PC-3 (cell line): ENCODE measurements at regions of chr16 and their contacts with region 1.

Region 1: DNA sequence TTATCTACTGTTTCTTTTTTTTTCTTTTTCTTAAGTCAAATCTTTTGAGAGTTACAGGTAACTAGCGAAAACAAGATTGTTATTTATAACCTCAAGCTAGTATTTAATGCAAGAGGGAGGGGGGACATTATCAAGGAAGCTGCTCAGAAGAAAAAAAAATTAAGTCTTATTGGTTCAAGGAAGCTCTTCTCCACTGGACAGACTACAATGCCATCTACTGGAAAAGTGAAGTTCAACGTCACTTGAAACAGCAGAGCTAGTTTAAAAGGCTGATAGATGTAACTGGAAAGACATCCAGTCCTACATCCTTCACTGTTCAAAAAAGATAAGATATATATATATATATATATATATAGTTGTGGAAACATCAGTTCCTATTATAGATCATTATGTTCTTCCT is 418.0 kb upstream of the PSMD7 start:
- DNase-seq: peak; percentile 62
- ATAC-seq: peak; percentile 61
- H3K4me3 ChIP-seq: no peak overlapping the region
- H3K27ac ChIP-seq: no peak overlapping the region
- H3K4me1 ChIP-seq: no peaks in the 10 kb centered on the region
- H3K27me3 ChIP-seq: peaks cover 43% of the 10 kb centered on the region
- CTCF ChIP-seq: peak; percentile 57

Region 2: GRCh38 chr16:72124761-72125634 is 1753.6 kb before region 1 on chr16:
- CTCF ChIA-PET with region 1: no interaction called
- POLR2A ChIA-PET with region 1: no interaction called
- intact Hi-C with region 1: loop called (anchors 10 kb)
- DNase-seq: peak; percentile 61
- ATAC-seq: peak; percentile 86
- H3K4me3 ChIP-seq: no peak overlapping the region
- H3K27ac ChIP-seq: no peak overlapping the region
- H3K4me1 ChIP-seq: no peaks in the 10 kb centered on the region
- H3K27me3 ChIP-seq: no peaks in the 10 kb centered on the region
- CTCF ChIP-seq: peak; percentile 76

Region 3: DNA sequence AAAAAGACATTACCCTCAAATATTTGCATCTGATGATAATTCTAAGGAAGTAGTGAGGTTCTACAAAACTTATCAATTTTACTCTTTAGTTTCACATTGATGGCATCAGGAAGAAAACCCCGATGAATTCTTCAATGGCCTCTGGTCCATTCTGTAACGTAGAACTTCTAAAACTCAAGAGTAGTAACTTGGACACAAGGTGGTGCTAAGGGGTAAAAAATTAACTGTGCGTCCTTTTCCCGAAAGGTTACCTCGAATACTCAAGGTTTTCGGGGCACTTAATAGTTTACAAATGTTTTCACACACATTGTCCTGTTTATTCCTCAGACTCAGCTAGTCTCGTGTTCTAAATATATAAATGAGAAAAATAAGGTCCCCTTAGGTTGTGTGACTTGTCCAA is 313.3 kb before region 1 on chr16:
- CTCF ChIA-PET with region 1: no interaction called
- POLR2A ChIA-PET with region 1: no interaction called
- intact Hi-C with region 1: loop called (anchors 1 kb)
- DNase-seq: peak; percentile 37
- ATAC-seq: no peak
- H3K4me3 ChIP-seq: no peak overlapping the region
- H3K27ac ChIP-seq: no peak overlapping the region
- H3K4me1 ChIP-seq: no peaks in the 10 kb centered on the region
- H3K27me3 ChIP-seq: peaks cover 45% of the 10 kb centered on the region
- CTCF ChIP-seq: peak; percentile 56

Region 4: GRCh38 chr16:73823205-73823849 is 55.3 kb before region 1 on chr16:
- CTCF ChIA-PET with region 1: no interaction called
- POLR2A ChIA-PET with region 1: no interaction called
- intact Hi-C with region 1: no loop called
- DNase-seq: no peak
- ATAC-seq: no peak
- H3K4me3 ChIP-seq: no peak overlapping the region
- H3K27ac ChIP-seq: no peak overlapping the region
- H3K4me1 ChIP-seq: no peaks in the 10 kb centered on the region
- H3K27me3 ChIP-seq: no peaks in the 10 kb centered on the region
- CTCF ChIP-seq: no peak

Region 5: GRCh38 chr16:74100395-74101322 is 222.0 kb after region 1 on chr16:
- CTCF ChIA-PET with region 1: no interaction called
- POLR2A ChIA-PET with region 1: no interaction called
- intact Hi-C with region 1: no loop called
- DNase-seq: no peak
- ATAC-seq: no peak
- H3K4me3 ChIP-seq: no peak overlapping the region
- H3K27ac ChIP-seq: no peak overlapping the region
- H3K4me1 ChIP-seq: no peaks in the 10 kb centered on the region
- H3K27me3 ChIP-seq: peaks cover 17% of the 10 kb centered on the region
- CTCF ChIP-seq: no peak